ENCODE measurements at regions of chr9 and their contacts with region 1.

Region 1: GRCh38 chr9:96661711-96662110 is 6.6 kb upstream of the PRXL2C start:
- DNase-seq: no peak
- H3K4me3 ChIP-seq: no peak overlapping the region
- H3K4me1 ChIP-seq: peaks cover 2% of the 10 kb centered on the region; the same call in 1 of the 2 replicates
- H3K27me3 ChIP-seq: no peaks in the 10 kb centered on the region

Region 2: GRCh38 chr9:96327694-96328352 is 333.9 kb before region 1 on chr9:
- in situ Hi-C with region 1: loop called (anchors 10 kb)
- DNase-seq: peak; percentile 15 to 66
- H3K4me3 ChIP-seq: no peak overlapping the region
- H3K4me1 ChIP-seq: no peaks in the 10 kb centered on the region
- H3K27me3 ChIP-seq: no peaks in the 10 kb centered on the region

Measured in HAP-1 (cell line).